Activated CD4-positive, alpha-beta T cell treated with anti-CD3 and anti-CD28 coated beads for 36 hours (primary cell): ENCODE measurements at regions of chr7 and their contacts with region 1.

Region 1: DNA sequence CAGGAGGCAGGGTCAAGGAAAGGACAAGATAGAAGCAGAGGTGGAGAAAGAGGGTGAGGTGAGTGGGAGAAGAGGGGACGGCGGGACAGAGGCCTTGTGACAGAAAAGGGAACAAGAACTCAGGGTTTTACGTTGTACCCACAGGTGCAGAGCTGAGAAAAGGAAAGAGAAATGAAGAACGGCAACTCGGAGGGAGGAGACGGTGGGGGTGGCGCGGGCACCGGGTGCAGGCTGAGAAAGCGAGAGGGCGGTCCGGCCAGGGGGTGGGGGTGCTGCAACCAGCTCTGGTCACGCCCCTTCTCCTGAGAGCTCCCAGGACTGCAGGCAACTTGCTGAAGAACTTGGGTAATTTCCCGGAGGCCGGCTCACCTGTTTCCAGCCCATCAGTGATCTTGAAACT is 65.3 kb downstream of the CARD11 start:
- DNase-seq: peak; percentile 98
- ATAC-seq: peak; percentile 91
- H3K4me3 Mint-ChIP-seq: peak overlapping the region; percentile 74
- H3K27ac Mint-ChIP-seq: peak overlapping the region; percentile 94
- H3K4me1 Mint-ChIP-seq: peaks cover 75% of the 10 kb centered on the region
- H3K27me3 Mint-ChIP-seq: no peaks in the 10 kb centered on the region

Region 2: DNA sequence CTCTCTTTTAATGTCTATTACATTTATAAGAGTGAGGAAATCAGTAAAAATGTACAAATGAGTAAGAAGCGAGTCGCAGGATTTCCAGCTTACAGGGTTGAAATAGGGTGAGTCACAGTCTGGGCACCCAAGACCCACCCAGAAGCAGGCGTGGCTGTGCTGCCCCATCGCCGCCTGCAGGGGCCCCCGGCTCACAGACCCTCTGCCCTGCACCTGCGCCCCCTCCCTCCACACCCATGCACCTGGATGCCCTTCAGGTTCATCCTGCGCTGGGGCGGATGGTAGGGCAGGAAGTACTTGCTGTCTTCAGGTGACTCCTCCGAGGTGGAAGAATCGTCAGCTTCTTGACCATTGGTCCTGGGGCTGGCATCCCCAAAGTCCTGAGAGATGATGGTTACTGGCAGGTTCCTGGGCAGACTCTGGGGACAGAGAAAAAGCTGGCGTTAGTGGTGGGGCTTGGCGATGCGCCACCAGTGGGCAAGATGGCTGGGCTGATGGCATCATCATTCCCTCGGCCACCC is 44.1 kb before region 1 on chr7:
- CTCF ChIA-PET with region 1: interaction called, 4 read pairs
- POLR2A ChIA-PET with region 1: no interaction called
- intact Hi-C with region 1: loop called in 1 of 2 experiments (anchors 1 kb)
- DNase-seq: peak; percentile 82
- ATAC-seq: peak; percentile 98
- H3K4me3 Mint-ChIP-seq: peak overlapping the region; percentile 43
- H3K27ac Mint-ChIP-seq: peak overlapping the region; percentile 100
- H3K4me1 Mint-ChIP-seq: peaks cover 20% of the 10 kb centered on the region
- H3K27me3 Mint-ChIP-seq: no peaks in the 10 kb centered on the region

Region 3: DNA sequence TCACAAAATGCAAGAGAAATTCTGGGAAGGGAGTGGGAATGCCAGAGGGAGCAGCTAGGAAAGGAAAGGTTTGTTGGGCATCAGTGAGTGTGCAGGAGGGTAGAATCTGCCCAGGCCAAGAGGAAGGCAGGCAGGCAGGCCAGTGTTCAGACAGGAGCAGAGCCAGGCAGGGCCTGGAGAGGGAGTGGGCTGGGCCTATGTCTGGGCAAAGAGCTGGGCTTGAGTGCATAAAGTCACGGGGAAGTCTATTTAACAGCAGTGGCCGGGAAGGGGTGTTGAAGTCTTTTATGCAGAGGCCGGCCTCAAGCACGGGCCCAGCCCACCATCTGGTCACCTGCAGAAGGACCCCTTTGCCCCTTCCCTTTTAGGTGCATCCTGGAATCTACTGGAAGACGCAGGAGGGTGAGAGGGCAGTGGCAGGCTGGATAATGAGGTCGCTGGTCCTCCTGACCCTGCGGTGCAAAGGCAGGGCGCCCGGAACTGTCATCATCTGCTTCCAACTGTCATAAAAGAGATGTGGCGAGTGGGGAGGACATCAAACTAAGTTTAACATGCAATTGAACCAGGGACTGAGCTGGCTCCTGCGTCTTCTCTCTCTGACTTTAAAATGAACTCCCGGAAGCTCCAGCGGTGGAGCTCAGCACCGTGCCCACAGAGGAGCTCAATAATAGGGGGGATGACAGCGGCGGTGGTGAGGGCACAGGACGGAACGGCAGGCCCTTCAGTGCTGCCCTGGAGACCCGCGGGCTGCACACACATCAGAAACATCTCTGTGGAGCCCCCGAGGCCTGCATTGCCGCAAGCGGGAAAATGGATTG is 35.8 kb after region 1 on chr7:
- CTCF ChIA-PET with region 1: interaction called, 3 read pairs
- POLR2A ChIA-PET with region 1: no interaction called
- intact Hi-C with region 1: loop called in 1 of 2 experiments (anchors 5 kb)
- DNase-seq: no peak
- ATAC-seq: no peak
- H3K4me3 Mint-ChIP-seq: no peak overlapping the region
- H3K27ac Mint-ChIP-seq: peak overlapping the region; percentile 31
- H3K4me1 Mint-ChIP-seq: peaks cover 41% of the 10 kb centered on the region
- H3K27me3 Mint-ChIP-seq: no peaks in the 10 kb centered on the region

Region 4: DNA sequence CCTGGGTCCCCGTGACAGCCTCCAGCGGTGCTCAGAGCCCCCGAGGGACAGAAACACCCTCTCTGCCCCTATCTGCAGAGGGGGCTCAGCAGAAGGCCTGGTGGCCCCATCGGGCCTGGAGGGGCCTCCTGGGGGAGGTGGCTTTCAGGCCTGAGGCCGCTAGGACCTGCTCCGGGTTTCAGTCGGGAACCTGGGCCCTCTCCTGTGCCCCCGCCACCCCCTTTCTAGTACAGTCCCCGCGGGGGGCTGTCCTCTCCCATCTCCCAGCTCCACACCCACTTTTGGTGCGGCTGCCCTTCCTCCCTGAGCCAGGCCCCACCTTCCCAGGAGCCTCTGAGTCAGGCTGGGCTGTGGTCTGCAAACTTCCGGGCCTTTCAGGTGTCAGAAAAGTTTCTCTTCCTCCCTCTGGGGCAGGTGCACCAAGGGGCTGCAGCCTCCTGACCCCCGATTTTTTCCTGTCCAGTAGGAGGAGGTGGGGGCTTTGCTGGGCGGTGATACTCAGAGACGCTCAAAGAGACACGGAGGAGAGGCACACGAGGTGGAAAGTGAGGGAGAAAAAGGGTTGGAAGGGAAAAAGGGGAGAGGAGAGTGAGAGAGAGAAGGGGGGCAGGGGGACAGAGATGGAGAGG is 64.6 kb after region 1 on chr7:
- CTCF ChIA-PET with region 1: no interaction called
- POLR2A ChIA-PET with region 1: interaction called, 4 read pairs
- intact Hi-C with region 1: loop called (anchors 1 to 2 kb)
- DNase-seq: peak; percentile 86
- ATAC-seq: peak; percentile 80
- H3K4me3 Mint-ChIP-seq: peak overlapping the region; percentile 97
- H3K27ac Mint-ChIP-seq: peak overlapping the region; percentile 97
- H3K4me1 Mint-ChIP-seq: peaks cover 55% of the 10 kb centered on the region
- H3K27me3 Mint-ChIP-seq: no peaks in the 10 kb centered on the region